CD4-positive, alpha-beta T cell (primary cell): ENCODE measurements at regions of chr12 and their contacts with region 1.

Region 1: GRCh38 chr12:118372541-118373495 is at the start of gene TAOK3:
- DNase-seq: peak; percentile 94 to 99 (median 96)
- ATAC-seq: peak; percentile 84
- H3K4me3 ChIP-seq: peak within 1 kb of the TSS; percentile 86
- H3K4me3 Mint-ChIP-seq: peak within 1 kb of the TSS; percentile 100
- H3K27ac ChIP-seq: peak within 1 kb of the TSS; percentile 46 to 71
- H3K27ac Mint-ChIP-seq: peak within 1 kb of the TSS; percentile 100
- H3K4me1 ChIP-seq: peaks cover 49% of the 10 kb centered on the region
- H3K4me1 Mint-ChIP-seq: peaks cover 61% of the 10 kb centered on the region
- H3K27me3 ChIP-seq: no peaks in the 10 kb centered on the region
- H3K27me3 Mint-ChIP-seq: no peaks in the 10 kb centered on the region
- CTCF ChIP-seq: no peak
- total RNA-seq, gene TAOK3: 53.5 to 56.6 TPM

Region 2: GRCh38 chr12:117190210-117190781 is 1182.5 kb before region 1 on chr12 and contains the start of gene FBXO21:
- CTCF ChIA-PET with region 1: no interaction called
- POLR2A ChIA-PET with region 1: no interaction called
- intact Hi-C with region 1: loop called in 1 of 2 experiments (anchors 5 kb)
- DNase-seq: peak; percentile 89 to 97 (median 94)
- ATAC-seq: peak; percentile 91
- H3K4me3 ChIP-seq: peak within 1 kb of the TSS; percentile 91
- H3K4me3 Mint-ChIP-seq: peak within 1 kb of the TSS; percentile 94
- H3K27ac ChIP-seq: peak within 1 kb of the TSS in 1 of 2 donors; percentile 44
- H3K27ac Mint-ChIP-seq: peak within 1 kb of the TSS; percentile 91
- H3K4me1 ChIP-seq: peaks cover 19% of the 10 kb centered on the region
- H3K4me1 Mint-ChIP-seq: peaks cover 44% of the 10 kb centered on the region
- H3K27me3 ChIP-seq: no peaks in the 10 kb centered on the region
- H3K27me3 Mint-ChIP-seq: no peaks in the 10 kb centered on the region
- CTCF ChIP-seq: no peak
- total RNA-seq, gene FBXO21: 67.7 to 67.9 TPM

Region 3: DNA sequence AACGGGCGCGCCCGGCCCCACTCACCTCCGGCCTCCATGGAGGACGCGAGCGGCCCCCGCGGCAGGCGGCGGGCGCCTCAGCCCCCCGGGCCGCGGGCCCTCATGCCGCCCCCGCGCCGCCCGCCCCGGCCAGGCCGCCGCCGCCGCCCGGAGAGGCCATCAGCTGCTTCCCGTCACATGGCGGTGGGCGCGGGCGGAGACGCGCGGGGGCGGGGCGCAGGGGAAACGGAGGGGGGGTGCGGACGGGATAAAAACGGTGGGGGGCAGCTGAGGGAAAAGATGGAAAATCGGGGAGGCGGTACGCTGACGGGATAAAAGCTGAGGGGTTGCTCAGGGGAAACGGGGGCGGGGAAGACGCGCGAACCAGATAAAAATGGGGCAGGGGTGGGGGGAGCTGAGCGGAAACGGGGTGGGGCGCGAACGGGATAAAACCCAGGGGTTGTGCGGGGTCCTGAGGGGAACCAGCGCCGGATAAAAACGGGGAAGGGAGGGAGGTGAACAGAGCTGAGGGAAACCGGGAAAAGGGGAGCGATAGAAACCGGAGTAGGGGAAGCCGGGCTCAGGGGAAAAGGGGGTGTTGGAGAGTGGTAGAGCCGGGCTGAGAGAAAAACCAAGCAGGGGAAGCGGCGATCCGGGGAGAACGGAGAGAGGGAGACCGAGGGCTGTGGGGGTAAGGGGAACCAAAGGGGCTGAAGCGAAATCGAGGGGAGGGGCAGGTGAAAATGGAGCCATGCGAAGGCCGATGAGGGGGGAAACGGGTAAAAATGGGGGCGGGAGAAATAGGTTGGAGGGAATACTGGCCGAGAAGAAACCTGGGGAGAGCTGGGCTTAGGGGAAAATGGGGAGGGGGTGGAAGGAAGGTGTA is 311.6 kb before region 1 on chr12 and contains the start of gene WSB2:
- CTCF ChIA-PET with region 1: interaction called, 7 read pairs
- POLR2A ChIA-PET with region 1: interaction called, 10 read pairs
- intact Hi-C with region 1: loop called in 1 of 2 experiments (anchors 5 kb)
- DNase-seq: peak; percentile 16 to 70 (median 42)
- ATAC-seq: peak; percentile 41
- H3K4me3 ChIP-seq: peak within 1 kb of the TSS; percentile 84
- H3K4me3 Mint-ChIP-seq: peak within 1 kb of the TSS; percentile 99
- H3K27ac ChIP-seq: peak within 1 kb of the TSS; percentile 61 to 85
- H3K27ac Mint-ChIP-seq: peak within 1 kb of the TSS; percentile 90
- H3K4me1 ChIP-seq: peaks cover 30% of the 10 kb centered on the region
- H3K4me1 Mint-ChIP-seq: peaks cover 51% of the 10 kb centered on the region
- H3K27me3 ChIP-seq: no peaks in the 10 kb centered on the region
- H3K27me3 Mint-ChIP-seq: peaks cover 4% of the 10 kb centered on the region
- CTCF ChIP-seq: no peak
- total RNA-seq, gene WSB2: 12.0 to 13.4 TPM

Region 4: GRCh38 chr12:118183705-118184104 is 189.1 kb before region 1 on chr12:
- CTCF ChIA-PET with region 1: interaction called, 11 read pairs
- POLR2A ChIA-PET with region 1: interaction called, 13 read pairs
- intact Hi-C with region 1: loop called (anchors 1 kb)
- DNase-seq: no peak
- ATAC-seq: no peak
- H3K4me3 ChIP-seq: no peak overlapping the region
- H3K4me3 Mint-ChIP-seq: no peak overlapping the region
- H3K27ac ChIP-seq: no peak overlapping the region
- H3K27ac Mint-ChIP-seq: no peak overlapping the region
- H3K4me1 ChIP-seq: no peaks in the 10 kb centered on the region
- H3K4me1 Mint-ChIP-seq: peaks cover 41% of the 10 kb centered on the region
- H3K27me3 ChIP-seq: no peaks in the 10 kb centered on the region
- H3K27me3 Mint-ChIP-seq: no peaks in the 10 kb centered on the region
- CTCF ChIP-seq: no peak

Region 5: GRCh38 chr12:118357257-118358007 is 15.4 kb before region 1 on chr12:
- CTCF ChIA-PET with region 1: interaction called, 39 read pairs
- POLR2A ChIA-PET with region 1: interaction called, 76 read pairs
- intact Hi-C with region 1: no loop called
- DNase-seq: peak in 9 of 14 experiments; percentile 7 to 86 (median 55)
- ATAC-seq: peak; percentile 77
- H3K4me3 ChIP-seq: peak overlapping the region; percentile 6
- H3K4me3 Mint-ChIP-seq: peak overlapping the region; percentile 74
- H3K27ac ChIP-seq: peak overlapping the region in 1 of 2 donors; percentile 70
- H3K27ac Mint-ChIP-seq: peak overlapping the region; percentile 84
- H3K4me1 ChIP-seq: peaks cover 15% of the 10 kb centered on the region
- H3K4me1 Mint-ChIP-seq: peaks cover 63% of the 10 kb centered on the region
- H3K27me3 ChIP-seq: no peaks in the 10 kb centered on the region
- H3K27me3 Mint-ChIP-seq: no peaks in the 10 kb centered on the region
- CTCF ChIP-seq: no peak